ENCODE measurements at regions of chr10 and their contacts with region 1.

Region 1: GRCh38 chr10:8331883-8332729 is 277.6 kb downstream of the GATA3 start:
- DNase-seq: peak; percentile 94 to 97 (median 95)
- H3K4me3 ChIP-seq: peak overlapping the region; percentile 67
- H3K4me3 Mint-ChIP-seq: peak overlapping the region; percentile 84 to 94 (median 90)
- H3K27ac ChIP-seq: peak overlapping the region; percentile 78
- H3K27ac Mint-ChIP-seq: peak overlapping the region; percentile 91 to 99 (median 98)
- H3K4me1 ChIP-seq: peaks cover 32% of the 10 kb centered on the region
- H3K4me1 Mint-ChIP-seq: peaks cover 27 to 69% (median 42%) of the 10 kb centered on the region in 4 donors
- H3K27me3 ChIP-seq: no peaks in the 10 kb centered on the region
- H3K27me3 Mint-ChIP-seq: no peaks in the 10 kb centered on the region

Region 2: GRCh38 chr10:7980196-7980595 is 351.9 kb before region 1 on chr10:
- CTCF ChIA-PET with region 1: no interaction called
- POLR2A ChIA-PET with region 1: no interaction called
- intact Hi-C with region 1: no loop called
- DNase-seq: no peak
- H3K4me3 ChIP-seq: no peak overlapping the region
- H3K4me3 Mint-ChIP-seq: no peak overlapping the region
- H3K27ac ChIP-seq: no peak overlapping the region
- H3K27ac Mint-ChIP-seq: no peak overlapping the region
- H3K4me1 ChIP-seq: no peaks in the 10 kb centered on the region
- H3K4me1 Mint-ChIP-seq: no peaks in the 10 kb centered on the region
- H3K27me3 ChIP-seq: no peaks in the 10 kb centered on the region
- H3K27me3 Mint-ChIP-seq: no peaks in the 10 kb centered on the region

Region 3: DNA sequence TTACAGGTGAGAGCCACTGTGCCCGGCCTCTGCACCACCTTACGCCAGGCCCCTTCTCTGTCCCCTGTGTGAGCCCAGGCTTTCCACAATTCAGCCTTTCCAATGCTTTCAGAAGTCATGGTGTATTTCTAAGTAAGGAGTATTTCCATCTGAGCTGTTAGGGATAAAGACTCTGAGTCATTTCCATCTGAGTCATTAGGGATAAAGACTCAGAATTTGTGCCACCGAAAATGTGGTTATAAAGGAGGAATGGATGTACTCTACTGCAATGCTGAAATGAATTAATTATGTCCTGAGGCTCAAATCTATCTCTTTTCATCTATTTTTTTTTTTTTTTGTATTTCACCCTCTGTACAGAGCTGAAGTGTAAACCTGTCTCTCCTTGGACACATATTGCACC is 193.6 kb before region 1 on chr10:
- CTCF ChIA-PET with region 1: interaction called, 4 read pairs
- POLR2A ChIA-PET with region 1: interaction called, 32 read pairs
- intact Hi-C with region 1: loop called (anchors 1 kb)
- DNase-seq: no peak
- H3K4me3 ChIP-seq: no peak overlapping the region
- H3K4me3 Mint-ChIP-seq: peak overlapping the region in 7 of 8 donors; percentile 21 to 82 (median 64)
- H3K27ac ChIP-seq: no peak overlapping the region
- H3K27ac Mint-ChIP-seq: peak overlapping the region in 6 of 7 donors; percentile 65 to 98 (median 87)
- H3K4me1 ChIP-seq: peaks cover 28% of the 10 kb centered on the region
- H3K4me1 Mint-ChIP-seq: peaks cover 24 to 43% (median 33%) of the 10 kb centered on the region in 4 donors
- H3K27me3 ChIP-seq: no peaks in the 10 kb centered on the region
- H3K27me3 Mint-ChIP-seq: no peaks in the 10 kb centered on the region

Region 4: DNA sequence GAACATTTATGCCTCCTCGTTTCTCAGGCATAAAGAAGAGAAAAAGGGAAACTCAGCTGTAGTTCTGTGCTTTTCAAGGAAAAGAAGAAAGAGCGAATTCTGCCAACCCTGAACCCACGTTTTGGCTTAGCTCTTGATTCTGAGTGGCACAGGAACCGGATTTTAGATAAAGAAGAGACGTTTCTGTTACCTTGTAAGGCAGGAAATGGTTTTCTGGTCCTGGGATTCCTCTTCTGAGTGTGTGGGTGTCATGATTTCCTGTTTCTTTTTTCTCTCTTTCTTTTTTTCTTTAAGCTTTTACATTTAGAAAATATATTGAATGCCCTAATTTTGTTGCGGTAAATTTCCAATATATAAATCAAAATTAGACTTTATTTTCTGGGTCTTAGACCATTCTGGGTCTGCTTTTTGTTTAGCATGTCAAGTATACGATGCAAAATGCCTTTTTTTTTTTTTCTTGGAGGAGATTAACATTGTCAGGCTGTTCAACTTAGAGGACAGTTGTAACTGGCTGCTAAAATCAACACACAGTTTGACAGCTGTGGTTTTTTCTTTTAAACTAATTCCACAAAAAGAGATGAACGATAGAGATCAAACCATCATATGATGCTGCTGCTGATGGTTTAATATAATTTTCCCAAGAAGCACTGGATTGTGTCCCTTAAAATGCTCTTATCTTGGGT is 86.8 kb before region 1 on chr10:
- CTCF ChIA-PET with region 1: interaction called, 4 read pairs
- POLR2A ChIA-PET with region 1: interaction called, 21 read pairs
- intact Hi-C with region 1: loop called (anchors 1 kb)
- DNase-seq: peak in 4 of 5 donors; percentile 55 to 64 (median 59)
- H3K4me3 ChIP-seq: peak overlapping the region in 1 of 2 donors; percentile 34
- H3K4me3 Mint-ChIP-seq: peak overlapping the region; percentile 51 to 90 (median 74)
- H3K27ac ChIP-seq: peak overlapping the region; percentile 41
- H3K27ac Mint-ChIP-seq: peak overlapping the region; percentile 75 to 95 (median 93)
- H3K4me1 ChIP-seq: peaks cover 52% of the 10 kb centered on the region
- H3K4me1 Mint-ChIP-seq: peaks cover 39 to 74% (median 55%) of the 10 kb centered on the region in 4 donors
- H3K27me3 ChIP-seq: no peaks in the 10 kb centered on the region
- H3K27me3 Mint-ChIP-seq: no peaks in the 10 kb centered on the region

Region 5: GRCh38 chr10:8404391-8405120 is 72.5 kb after region 1 on chr10:
- CTCF ChIA-PET with region 1: interaction called, 18 read pairs
- POLR2A ChIA-PET with region 1: interaction called, 118 read pairs
- intact Hi-C with region 1: loop called (anchors 1 kb)
- DNase-seq: peak; percentile 82 to 95 (median 92)
- H3K4me3 ChIP-seq: peak overlapping the region; percentile 12 to 34
- H3K4me3 Mint-ChIP-seq: peak overlapping the region; percentile 56 to 84 (median 78)
- H3K27ac ChIP-seq: peak overlapping the region; percentile 95
- H3K27ac Mint-ChIP-seq: peak overlapping the region; percentile 92 to 100 (median 98)
- H3K4me1 ChIP-seq: peaks cover 87% of the 10 kb centered on the region
- H3K4me1 Mint-ChIP-seq: peaks cover 71 to 91% (median 82%) of the 10 kb centered on the region in 4 donors
- H3K27me3 ChIP-seq: no peaks in the 10 kb centered on the region
- H3K27me3 Mint-ChIP-seq: no peaks in the 10 kb centered on the region

Region 6: DNA sequence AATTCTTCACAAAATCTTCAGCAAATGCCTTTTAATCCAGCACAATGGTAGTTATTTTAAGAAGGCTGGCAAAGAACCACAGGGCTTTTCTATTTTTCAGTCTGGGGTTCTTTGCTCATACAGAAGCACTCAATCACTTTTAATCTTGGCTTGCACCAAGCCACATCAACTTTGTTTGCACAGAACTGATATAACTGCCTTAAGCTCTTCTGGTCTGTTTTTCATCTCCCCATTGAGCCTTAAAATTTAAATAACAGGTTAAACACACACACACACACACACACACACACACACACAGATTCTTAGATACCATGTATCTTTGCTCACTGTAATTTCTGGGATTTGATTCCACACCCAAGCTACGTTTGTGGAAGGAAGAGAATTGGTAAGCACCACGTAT is 99.4 kb after region 1 on chr10:
- CTCF ChIA-PET with region 1: no interaction called
- POLR2A ChIA-PET with region 1: interaction called, 12 read pairs
- intact Hi-C with region 1: no loop called
- DNase-seq: no peak
- H3K4me3 ChIP-seq: no peak overlapping the region
- H3K4me3 Mint-ChIP-seq: no peak overlapping the region
- H3K27ac ChIP-seq: no peak overlapping the region
- H3K27ac Mint-ChIP-seq: peak overlapping the region in 1 of 7 donors; percentile 60
- H3K4me1 ChIP-seq: no peaks in the 10 kb centered on the region
- H3K4me1 Mint-ChIP-seq: peaks cover 5 to 28% (median 9%) of the 10 kb centered on the region in 4 donors
- H3K27me3 ChIP-seq: no peaks in the 10 kb centered on the region
- H3K27me3 Mint-ChIP-seq: no peaks in the 10 kb centered on the region

Region 7: DNA sequence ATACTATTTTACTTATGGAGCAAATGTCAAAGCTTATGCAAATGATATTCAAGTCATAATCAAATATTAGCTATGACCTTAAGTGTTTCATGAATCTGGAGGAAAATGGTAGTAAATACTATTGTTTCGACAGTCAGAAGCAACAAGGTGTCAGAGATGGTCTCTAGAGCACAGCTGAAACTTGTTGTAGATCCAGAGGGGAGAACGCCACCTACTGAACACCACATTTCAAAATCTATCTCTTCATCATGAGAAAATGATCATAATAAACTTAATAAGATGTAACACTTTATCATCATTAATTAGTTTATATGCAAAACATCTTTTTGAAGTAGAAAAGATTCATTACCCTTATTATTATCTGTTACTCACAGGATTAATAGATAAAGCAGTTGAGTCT is 141.1 kb after region 1 on chr10:
- CTCF ChIA-PET with region 1: interaction called, 10 read pairs
- POLR2A ChIA-PET with region 1: interaction called, 11 read pairs
- intact Hi-C with region 1: loop called (anchors 1 kb)
- DNase-seq: peak in 4 of 5 donors; percentile 46 to 69 (median 64)
- H3K4me3 ChIP-seq: no peak overlapping the region
- H3K4me3 Mint-ChIP-seq: no peak overlapping the region
- H3K27ac ChIP-seq: no peak overlapping the region
- H3K27ac Mint-ChIP-seq: peak overlapping the region in 3 of 7 donors; percentile 35 to 48 (median 36)
- H3K4me1 ChIP-seq: no peaks in the 10 kb centered on the region
- H3K4me1 Mint-ChIP-seq: peaks cover 0 to 5% (median 3%) of the 10 kb centered on the region in 4 donors
- H3K27me3 ChIP-seq: no peaks in the 10 kb centered on the region
- H3K27me3 Mint-ChIP-seq: peaks cover 2 to 6% of the 10 kb centered on the region in 2 donors